ENCODE measurements at regions of chr3 and their contacts with region 1.

Region 1: GRCh38 chr3:32374788-32375595 is 16.7 kb upstream of the CMTM7 start:
- DNase-seq: peak; percentile 83
- ATAC-seq: peak; percentile 68
- H3K4me3 Mint-ChIP-seq: no peak overlapping the region
- H3K27ac Mint-ChIP-seq: no peak overlapping the region
- H3K4me1 Mint-ChIP-seq: peaks cover 24% of the 10 kb centered on the region
- H3K27me3 Mint-ChIP-seq: no peaks in the 10 kb centered on the region
- CTCF ChIP-seq: peak; percentile 76

Region 2: DNA sequence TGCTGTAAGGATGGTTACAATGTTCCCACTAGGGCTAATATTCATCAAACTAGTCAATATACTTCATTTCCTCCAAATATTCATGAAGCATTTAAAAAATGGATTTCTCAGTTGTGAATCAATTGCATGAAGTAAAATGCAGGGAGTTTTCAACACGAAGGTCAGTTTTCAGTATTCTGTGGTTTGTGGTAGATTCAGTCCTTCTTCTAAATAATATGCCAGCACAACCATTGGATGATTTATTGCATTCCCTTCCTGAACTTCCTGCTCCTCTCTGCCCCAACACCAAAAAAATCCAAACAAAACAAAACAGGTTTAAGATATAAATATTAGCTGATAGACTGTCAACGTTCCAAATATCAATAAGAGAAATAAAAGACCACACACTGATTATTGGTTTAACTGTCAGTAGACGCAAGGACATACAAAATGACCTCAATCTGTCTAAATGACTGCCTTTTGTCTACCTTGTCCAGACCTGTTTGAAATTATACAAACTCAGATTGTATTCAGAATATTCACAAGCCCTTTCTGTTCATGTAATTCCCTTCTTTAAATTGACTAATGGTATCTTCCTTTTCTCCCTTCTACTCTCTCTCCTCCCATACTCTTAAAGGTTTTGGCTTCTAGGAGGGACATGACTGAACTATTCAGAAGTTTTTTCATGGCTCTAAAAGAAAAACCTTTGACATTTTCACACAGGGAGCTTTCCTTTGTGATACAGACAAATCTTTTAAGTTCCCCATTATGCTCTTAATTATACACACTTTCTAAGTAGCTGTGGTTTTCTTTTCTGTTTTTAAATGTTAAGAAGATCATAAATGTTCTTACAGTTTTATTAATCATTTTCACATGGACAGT is 934.9 kb before region 1 on chr3:
- CTCF ChIA-PET with region 1: no interaction called
- POLR2A ChIA-PET with region 1: no interaction called
- intact Hi-C with region 1: no loop called
- DNase-seq: no peak
- ATAC-seq: no peak
- H3K4me3 Mint-ChIP-seq: no peak overlapping the region
- H3K27ac Mint-ChIP-seq: no peak overlapping the region
- H3K4me1 Mint-ChIP-seq: peaks cover 2% of the 10 kb centered on the region
- H3K27me3 Mint-ChIP-seq: no peaks in the 10 kb centered on the region
- CTCF ChIP-seq: no peak

Region 3: GRCh38 chr3:32296256-32297204 is 78.5 kb before region 1 on chr3:
- CTCF ChIA-PET with region 1: interaction called, 20 read pairs
- POLR2A ChIA-PET with region 1: no interaction called
- intact Hi-C with region 1: no loop called
- DNase-seq: peak; percentile 72
- ATAC-seq: peak; percentile 81
- H3K4me3 Mint-ChIP-seq: no peak overlapping the region
- H3K27ac Mint-ChIP-seq: peak overlapping the region; percentile 55
- H3K4me1 Mint-ChIP-seq: peaks cover 16% of the 10 kb centered on the region
- H3K27me3 Mint-ChIP-seq: no peaks in the 10 kb centered on the region
- CTCF ChIP-seq: peak; percentile 88

Region 4: DNA sequence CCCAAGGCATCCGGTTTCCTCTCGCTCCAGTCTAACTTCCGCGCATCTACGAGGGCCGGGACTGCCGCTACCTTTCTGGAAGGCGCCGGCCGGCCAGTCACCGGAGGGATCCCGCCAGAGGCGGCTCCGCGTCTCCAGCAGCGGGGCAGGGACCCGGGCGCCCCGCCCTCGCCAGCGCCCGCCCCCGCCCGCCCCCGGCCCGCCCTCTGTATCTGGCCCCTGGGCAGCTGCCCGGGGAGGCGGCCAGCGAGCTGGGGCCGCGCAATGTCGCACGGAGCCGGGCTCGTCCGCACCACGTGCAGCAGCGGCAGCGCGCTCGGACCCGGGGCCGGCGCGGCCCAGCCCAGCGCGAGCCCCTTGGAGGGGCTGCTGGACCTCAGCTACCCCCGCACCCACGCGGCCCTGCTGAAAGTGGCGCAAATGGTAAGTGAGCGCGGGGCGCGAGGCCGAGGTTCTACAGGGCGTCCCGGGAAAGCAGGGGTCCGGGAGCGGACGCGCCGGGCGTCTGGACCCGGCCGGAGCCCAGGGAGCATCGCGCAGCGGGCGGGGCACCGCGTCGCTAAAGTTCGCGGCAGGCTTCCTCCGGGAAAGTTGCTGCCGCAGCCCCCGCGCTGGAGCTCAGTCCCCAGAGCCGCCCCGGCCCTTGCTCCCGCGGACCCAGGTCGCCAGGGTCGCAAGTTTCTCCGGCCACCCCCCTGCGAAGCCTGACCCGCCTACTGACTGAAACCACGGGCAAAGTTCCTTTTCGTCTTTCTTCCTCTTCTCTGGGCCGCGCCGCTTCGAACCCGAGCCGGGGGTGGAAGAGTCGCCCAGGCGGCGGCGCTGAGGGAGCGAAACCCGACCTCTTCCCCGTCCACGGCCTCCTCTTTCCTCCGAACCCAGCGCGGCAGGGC is 16.9 kb after region 1 on chr3 and contains the start of gene CMTM7:
- CTCF ChIA-PET with region 1: interaction called, 69 read pairs
- POLR2A ChIA-PET with region 1: interaction called, 8 read pairs
- intact Hi-C with region 1: loop called (anchors 2 kb)
- DNase-seq: peak; percentile 48
- ATAC-seq: peak; percentile 67
- H3K4me3 Mint-ChIP-seq: peak within 1 kb of the TSS; percentile 87
- H3K27ac Mint-ChIP-seq: peak within 1 kb of the TSS; percentile 92
- H3K4me1 Mint-ChIP-seq: peaks cover 54% of the 10 kb centered on the region
- H3K27me3 Mint-ChIP-seq: no peaks in the 10 kb centered on the region
- CTCF ChIP-seq: no peak
- total RNA-seq, gene CMTM7: 36.1 to 37.2 TPM

Region 5: GRCh38 chr3:32414520-32415202 is 39.7 kb after region 1 on chr3:
- CTCF ChIA-PET with region 1: interaction called, 17 read pairs
- POLR2A ChIA-PET with region 1: no interaction called
- intact Hi-C with region 1: no loop called
- DNase-seq: peak; percentile 67
- ATAC-seq: peak; percentile 89
- H3K4me3 Mint-ChIP-seq: peak overlapping the region; percentile 39
- H3K27ac Mint-ChIP-seq: peak overlapping the region; percentile 92
- H3K4me1 Mint-ChIP-seq: peaks cover 70% of the 10 kb centered on the region
- H3K27me3 Mint-ChIP-seq: no peaks in the 10 kb centered on the region
- CTCF ChIP-seq: no peak

Region 6: GRCh38 chr3:32460031-32460749 is 85.2 kb after region 1 on chr3:
- CTCF ChIA-PET with region 1: interaction called, 16 read pairs
- POLR2A ChIA-PET with region 1: interaction called, 5 read pairs
- intact Hi-C with region 1: loop called (anchors 2 kb)
- DNase-seq: peak; percentile 87
- ATAC-seq: peak; percentile 88
- H3K4me3 Mint-ChIP-seq: peak overlapping the region; percentile 69
- H3K27ac Mint-ChIP-seq: no peak overlapping the region
- H3K4me1 Mint-ChIP-seq: peaks cover 41% of the 10 kb centered on the region
- H3K27me3 Mint-ChIP-seq: no peaks in the 10 kb centered on the region
- CTCF ChIP-seq: no peak

Measured in activated CD8-positive, alpha-beta T cell treated with anti-CD3 and anti-CD28 coated beads for 36 hours (primary cell).